Cardiac septum (tissue), 1 donor: ENCODE measurements at regions of chr3 and their contacts with region 1.

Region 1: GRCh38 chr3:14261229-14261628 is 82.6 kb downstream of the LSM3 start:
- DNase-seq: peak; percentile 92

Region 2: DNA sequence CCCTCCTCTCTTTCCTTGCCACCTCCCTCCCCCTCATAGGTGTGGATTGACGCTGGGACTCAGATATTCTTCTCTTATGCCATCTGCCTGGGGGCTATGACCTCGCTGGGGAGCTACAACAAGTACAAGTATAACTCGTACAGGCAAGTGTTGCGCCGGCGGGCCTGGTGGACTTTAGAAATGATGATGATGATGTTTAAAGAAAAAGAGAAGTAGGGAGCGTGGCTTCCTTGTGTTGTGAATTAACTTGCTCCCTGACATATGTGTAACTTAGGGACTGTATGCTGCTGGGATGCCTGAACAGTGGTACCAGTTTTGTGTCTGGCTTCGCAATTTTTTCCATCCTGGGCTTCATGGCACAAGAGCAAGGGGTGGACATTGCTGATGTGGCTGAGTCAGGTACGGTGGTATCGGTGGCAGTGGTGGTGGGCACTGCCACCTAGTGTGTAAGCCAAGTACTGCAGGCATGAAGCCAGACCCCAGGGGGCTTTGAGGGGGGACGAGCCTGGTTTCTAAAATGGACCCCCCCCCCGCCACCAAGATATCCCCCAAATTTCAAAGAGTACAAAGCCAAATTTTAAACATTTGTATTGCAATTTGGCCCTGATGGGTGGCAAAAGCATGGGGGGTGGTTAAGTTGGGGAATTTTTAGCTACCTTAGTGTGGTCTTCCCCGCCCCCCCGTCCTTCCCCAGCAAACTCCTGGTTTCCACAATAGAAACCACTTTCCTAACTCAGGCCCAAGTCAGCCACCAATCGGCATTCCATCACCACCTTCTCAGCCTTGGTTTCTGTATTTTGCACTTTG is 206.8 kb after region 1 on chr3:
- intact Hi-C with region 1: loop called (anchors 2 kb)
- DNase-seq: no peak

Region 3: DNA sequence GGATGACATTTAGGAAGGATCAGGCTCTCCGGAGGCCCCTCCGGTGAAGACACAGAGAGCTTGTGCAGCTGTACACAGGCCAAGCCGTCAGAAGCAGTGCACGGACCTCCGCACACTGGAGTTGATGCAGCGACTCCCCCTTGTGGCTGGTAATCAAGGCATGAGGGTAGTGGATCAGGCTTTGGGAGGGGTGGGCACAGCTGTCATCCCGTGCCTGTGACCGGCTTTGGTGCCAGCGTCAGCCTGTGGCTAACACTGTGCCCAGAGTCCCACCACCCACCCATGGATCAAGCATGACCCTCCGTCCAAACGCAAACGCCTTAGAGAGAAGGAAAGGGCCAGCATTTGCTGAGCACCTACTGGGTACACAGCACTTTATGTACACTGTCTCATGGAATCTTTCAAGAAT is 287.1 kb after region 1 on chr3:
- intact Hi-C with region 1: loop called (anchors 2 kb)
- DNase-seq: no peak